ENCODE measurements at regions of chr12 and their contacts with region 1.

Region 1: DNA sequence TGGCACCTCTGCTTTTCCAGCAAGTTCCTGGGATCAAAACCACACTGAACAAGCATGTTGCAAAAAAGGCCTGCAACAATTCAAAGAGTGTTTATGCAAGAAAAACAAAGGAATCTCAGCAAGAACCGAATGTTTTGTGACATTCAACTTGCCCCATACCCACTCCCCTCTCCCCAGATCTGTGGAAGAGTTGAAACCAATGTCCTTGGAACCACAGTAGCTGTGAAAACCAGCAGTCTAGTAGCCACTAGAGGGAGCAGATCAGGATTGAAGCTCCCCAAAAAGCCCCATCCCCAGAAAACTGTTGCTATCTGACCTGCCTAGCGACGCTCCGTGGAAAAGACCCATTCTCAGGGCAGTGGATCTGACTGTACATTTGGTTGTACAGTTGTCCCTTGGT is 27.1 kb downstream of the PRKAB1 start:
- DNase-seq: no peak
- H3K4me3 ChIP-seq: no peak overlapping the region
- H3K27ac ChIP-seq: no peak overlapping the region
- H3K4me1 ChIP-seq: peaks cover 6 to 17% (median 10%) of the 10 kb centered on the region in 4 donors
- H3K27me3 ChIP-seq: no peaks in the 10 kb centered on the region
- CTCF ChIP-seq: peak; percentile 16 to 36 (median 17)
- EP300 ChIP-seq: no peak
- POLR2A ChIP-seq: no peak

Region 2: DNA sequence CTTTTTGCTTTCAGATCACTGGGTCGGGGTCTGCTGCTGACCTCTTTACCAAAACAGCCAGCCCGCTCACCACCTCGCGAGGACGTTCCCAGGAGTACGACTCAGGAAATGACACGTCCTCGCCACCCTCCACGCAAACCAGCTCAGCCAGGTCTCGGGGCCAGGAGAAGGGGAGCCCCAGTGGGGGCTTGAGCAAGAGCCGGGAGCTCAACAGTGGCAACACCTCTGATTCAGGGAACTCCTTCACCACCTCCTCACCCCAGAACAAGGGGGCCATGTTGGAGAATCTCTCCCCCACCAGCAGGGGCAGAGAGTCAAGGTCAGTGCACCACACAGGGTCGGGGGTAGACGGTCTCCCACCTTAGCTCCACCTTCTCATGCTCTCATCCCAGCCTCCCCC is 549.7 kb before region 1 on chr12:
- intact Hi-C with region 1: no loop called
- DNase-seq: no peak
- H3K4me3 ChIP-seq: no peak overlapping the region
- H3K27ac ChIP-seq: no peak overlapping the region
- H3K4me1 ChIP-seq: peaks cover 0 to 3% (median 0%) of the 10 kb centered on the region in 4 donors
- H3K27me3 ChIP-seq: peaks cover 0 to 4% (median 0%) of the 10 kb centered on the region in 4 donors
- CTCF ChIP-seq: no peak
- EP300 ChIP-seq: no peak
- POLR2A ChIP-seq: no peak

Region 3: DNA sequence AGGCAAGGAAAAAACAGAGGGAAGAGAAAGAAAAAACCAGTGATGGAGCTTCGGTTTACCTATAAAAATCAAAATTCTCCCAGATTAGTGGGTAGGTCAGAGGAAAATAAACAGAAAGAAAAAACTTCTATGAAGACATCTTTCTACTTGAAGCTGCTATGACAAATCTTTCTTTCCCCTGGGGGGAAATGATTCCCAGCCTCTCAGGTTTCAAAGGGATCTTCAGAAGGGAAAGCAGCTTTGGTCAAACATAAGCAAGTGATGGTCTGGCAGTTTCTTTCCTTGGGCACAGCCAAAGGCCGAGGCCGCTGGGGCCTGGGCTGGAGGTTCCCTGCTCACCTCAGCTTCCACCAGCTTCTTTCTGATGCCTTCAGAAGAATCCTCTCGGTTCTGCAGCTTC is 77.4 kb after region 1 on chr12:
- intact Hi-C with region 1: loop called (anchors 10 kb)
- DNase-seq: no peak
- H3K4me3 ChIP-seq: no peak overlapping the region
- H3K27ac ChIP-seq: no peak overlapping the region
- H3K4me1 ChIP-seq: peaks cover 0 to under 1% (median 0%) of the 10 kb centered on the region in 4 donors
- H3K27me3 ChIP-seq: no peaks in the 10 kb centered on the region
- CTCF ChIP-seq: no peak
- EP300 ChIP-seq: no peak
- POLR2A ChIP-seq: no peak